ENCODE measurements at regions of chr20 and their contacts with region 1.

Region 1: GRCh38 chr20:16821211-16822089 is 73.3 kb downstream of the OTOR start:
- DNase-seq: peak; percentile 10
- H3K4me3 Mint-ChIP-seq: no peak overlapping the region
- H3K27ac Mint-ChIP-seq: no peak overlapping the region
- H3K4me1 Mint-ChIP-seq: peaks cover 1% of the 10 kb centered on the region
- H3K27me3 Mint-ChIP-seq: peaks cover 6% of the 10 kb centered on the region

Region 2: GRCh38 chr20:15708984-15709598 is 1112.4 kb before region 1 on chr20:
- intact Hi-C with region 1: loop called (anchors 5 kb)
- DNase-seq: peak; percentile 10
- H3K4me3 Mint-ChIP-seq: no peak overlapping the region
- H3K27ac Mint-ChIP-seq: no peak overlapping the region
- H3K4me1 Mint-ChIP-seq: no peaks in the 10 kb centered on the region
- H3K27me3 Mint-ChIP-seq: no peaks in the 10 kb centered on the region

Region 3: GRCh38 chr20:16803965-16804792 is 17.3 kb before region 1 on chr20:
- intact Hi-C with region 1: loop called (anchors 1 kb)
- DNase-seq: peak; percentile 20
- H3K4me3 Mint-ChIP-seq: no peak overlapping the region
- H3K27ac Mint-ChIP-seq: no peak overlapping the region
- H3K4me1 Mint-ChIP-seq: no peaks in the 10 kb centered on the region
- H3K27me3 Mint-ChIP-seq: peaks cover 16% of the 10 kb centered on the region